ENCODE measurements at regions of chr12 and their contacts with region 1.

Region 1: DNA sequence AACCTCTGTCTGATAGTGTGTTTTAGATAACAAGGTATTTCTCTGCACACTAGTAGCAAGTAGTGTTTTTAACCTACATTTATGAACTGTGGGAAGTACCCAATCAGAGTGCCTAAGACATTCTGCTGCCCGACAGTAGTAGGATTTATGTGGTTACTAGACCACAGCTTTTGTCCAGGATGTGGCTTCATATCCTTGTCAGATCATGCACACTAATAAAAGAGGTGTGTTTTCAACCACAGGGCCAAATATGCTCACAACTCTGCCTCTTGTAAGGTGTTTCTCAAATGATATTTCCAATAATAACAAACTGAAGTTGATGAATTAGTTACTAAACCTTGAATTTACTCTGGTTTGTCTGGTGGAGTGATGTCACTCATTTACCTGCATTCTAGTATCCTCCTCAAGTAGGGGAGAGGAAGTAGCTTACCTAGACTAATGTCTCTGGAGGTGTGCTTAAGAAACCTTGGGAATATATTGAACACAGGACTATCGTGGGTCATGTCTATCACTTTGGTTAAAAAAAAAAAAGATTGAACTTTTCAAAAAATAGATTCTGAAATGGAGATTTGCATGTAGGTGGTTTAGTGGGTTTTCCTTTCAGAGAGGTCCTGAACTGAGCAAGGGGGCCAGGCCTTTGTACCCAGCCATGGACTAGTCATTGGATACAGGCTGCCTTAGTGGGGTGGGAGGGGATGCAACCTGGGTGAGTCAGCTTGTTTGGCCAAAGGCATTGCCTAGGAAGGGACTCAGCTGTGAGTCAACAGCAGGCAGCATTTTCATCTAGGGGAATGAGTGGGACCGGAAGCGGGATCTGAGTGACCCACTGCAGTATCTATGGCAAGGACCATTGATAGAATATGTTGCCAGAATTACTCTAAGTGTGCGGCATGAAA is 14.1 kb downstream of the FBXW8 start:
- DNase-seq: peak in 9 of 10 donors; percentile 11 to 88 (median 76)
- ATAC-seq: peak; percentile 91 to 99
- H3K4me3 Mint-ChIP-seq: peak overlapping the region; percentile 53 to 86 (median 76)
- H3K27ac Mint-ChIP-seq: peak overlapping the region; percentile 15 to 94 (median 58)
- H3K4me1 Mint-ChIP-seq: peaks cover 36 to 85% (median 77%) of the 10 kb centered on the region in 4 donors
- H3K27me3 Mint-ChIP-seq: no peaks in the 10 kb centered on the region

Region 2: GRCh38 chr12:116455540-116456329 is 469.1 kb before region 1 on chr12:
- POLR2A ChIA-PET with region 1: no interaction called
- DNase-seq: no peak
- ATAC-seq: no peak
- H3K4me3 Mint-ChIP-seq: no peak overlapping the region
- H3K27ac Mint-ChIP-seq: no peak overlapping the region
- H3K4me1 Mint-ChIP-seq: peaks cover 0 to 6% (median under 1%) of the 10 kb centered on the region in 4 donors
- H3K27me3 Mint-ChIP-seq: peaks cover 0 to 7% (median 3%) of the 10 kb centered on the region in 5 donors

Region 3: DNA sequence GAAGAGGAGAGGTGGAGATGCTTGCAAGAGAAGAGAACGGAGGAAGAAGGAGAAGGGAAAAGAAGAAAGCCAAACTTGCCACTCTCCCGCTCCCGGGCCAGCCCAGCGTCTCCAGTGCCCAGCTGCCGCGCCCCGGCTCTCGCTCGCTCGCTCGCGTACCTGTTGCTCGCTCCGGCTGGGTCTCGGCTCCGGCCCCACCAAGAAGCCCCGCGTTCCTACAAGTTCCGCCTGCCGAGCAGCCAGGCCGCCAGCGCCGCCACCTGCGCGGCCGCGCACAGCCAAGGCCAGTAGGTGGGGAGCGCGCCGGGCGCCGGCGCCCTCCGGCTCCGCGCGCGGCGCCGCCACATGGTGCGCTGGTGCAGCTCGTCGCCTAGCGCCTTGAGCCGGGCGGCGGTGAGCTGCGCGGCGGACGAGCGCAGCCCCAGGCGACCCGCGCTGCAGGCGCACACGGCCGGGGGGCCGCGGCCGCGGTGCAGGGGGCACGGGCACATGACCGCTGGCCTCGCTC is 43.9 kb before region 1 on chr12:
- POLR2A ChIA-PET with region 1: no interaction called
- DNase-seq: peak in 8 of 10 donors; percentile 2 to 30 (median 20)
- ATAC-seq: peak; percentile 80 to 86
- H3K4me3 Mint-ChIP-seq: peak overlapping the region; percentile 75 to 99 (median 89)
- H3K27ac Mint-ChIP-seq: peak overlapping the region in 2 of 10 donors; percentile 10 to 51
- H3K4me1 Mint-ChIP-seq: peaks cover 17 to 41% (median 36%) of the 10 kb centered on the region in 4 donors
- H3K27me3 Mint-ChIP-seq: peaks cover 34 to 86% (median 60%) of the 10 kb centered on the region in 5 donors

Region 4: DNA sequence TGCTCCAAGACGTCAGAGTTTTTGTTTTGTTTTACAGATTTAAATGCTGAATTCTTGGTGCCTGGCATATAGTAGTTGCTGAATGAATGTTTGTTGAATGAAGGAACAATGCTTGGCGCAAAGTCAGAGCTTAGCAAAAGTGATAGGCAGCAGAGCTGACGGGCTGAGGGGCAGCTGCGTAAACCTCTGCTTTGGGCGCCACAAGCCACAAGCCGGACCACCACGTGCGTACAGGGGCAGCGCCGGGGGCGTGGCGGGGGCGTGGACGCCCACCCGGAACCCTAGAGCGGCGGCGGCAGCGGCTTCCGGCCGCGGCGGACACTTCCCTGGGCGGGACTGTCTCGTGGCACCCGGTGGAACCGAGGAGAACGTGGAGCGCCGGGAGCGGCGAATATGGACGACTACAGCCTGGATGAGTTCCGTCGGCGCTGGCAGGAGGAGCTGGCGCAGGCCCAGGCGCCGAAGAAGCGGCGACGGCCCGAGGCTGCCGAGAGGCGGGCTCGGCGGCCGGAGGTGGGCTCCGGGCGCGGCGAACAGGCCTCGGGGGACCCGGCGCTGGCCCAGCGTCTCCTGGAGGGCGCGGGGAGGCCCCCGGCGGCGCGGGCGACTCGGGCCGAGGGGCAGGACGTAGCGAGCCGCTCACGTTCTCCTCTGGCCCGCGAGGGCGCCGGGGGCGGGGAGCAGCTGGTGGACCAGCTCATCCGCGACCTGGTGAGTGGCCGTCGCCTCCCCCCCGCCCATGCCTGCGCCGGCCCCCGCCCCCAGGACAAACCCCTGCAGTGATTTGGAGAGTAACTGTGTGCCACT is 14.0 kb before region 1 on chr12 and contains the start of gene FBXW8:
- POLR2A ChIA-PET with region 1: interaction called, 10 read pairs
- DNase-seq: peak; percentile 29 to 76 (median 56)
- ATAC-seq: peak; percentile 87 to 90
- H3K4me3 Mint-ChIP-seq: peak within 1 kb of the TSS; percentile 86 to 99 (median 95)
- H3K27ac Mint-ChIP-seq: peak within 1 kb of the TSS; percentile 78 to 97 (median 90)
- H3K4me1 Mint-ChIP-seq: peaks cover 18 to 41% (median 38%) of the 10 kb centered on the region in 4 donors
- H3K27me3 Mint-ChIP-seq: no peaks in the 10 kb centered on the region
- polyA plus RNA-seq, gene FBXW8: 5.3 to 9.0 (median 6.4) TPM

Region 5: DNA sequence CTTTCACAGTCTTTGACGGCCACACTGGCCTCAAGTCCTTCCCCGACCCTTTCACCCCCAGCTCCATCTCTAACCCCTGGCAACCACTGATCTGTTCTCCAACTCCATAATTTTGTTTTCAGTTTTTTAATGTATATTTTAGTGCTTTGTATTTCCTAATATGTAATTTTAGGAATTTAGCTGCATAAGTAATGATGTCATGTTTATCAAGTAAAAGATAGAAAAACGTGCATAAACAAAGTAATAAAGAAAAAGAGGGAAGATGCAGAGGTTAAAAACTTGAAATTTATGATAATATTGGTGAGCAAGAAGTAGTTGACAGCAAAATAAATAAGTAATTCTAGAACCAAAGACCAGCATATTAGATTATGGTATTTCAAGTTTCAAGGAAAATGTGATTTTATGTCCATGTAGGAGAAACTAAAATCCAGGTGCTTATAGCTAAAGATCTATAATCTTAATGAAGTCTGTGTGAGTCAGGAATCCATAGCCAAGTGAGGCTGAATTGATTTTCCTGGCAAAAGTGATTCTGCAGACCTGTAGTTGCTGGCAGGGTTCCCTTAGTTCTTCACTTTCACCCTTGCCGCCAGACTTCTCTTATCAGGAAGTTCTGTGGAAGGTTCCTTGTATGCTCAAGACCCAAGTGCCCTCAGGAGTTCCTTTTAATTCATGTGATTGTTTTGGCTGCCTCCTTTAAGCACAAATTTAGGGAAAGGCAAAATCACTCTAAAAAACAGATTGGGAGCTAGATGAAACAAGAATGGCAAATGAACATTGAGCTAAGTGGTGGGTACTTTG is 10.3 kb after region 1 on chr12:
- POLR2A ChIA-PET with region 1: no interaction called
- DNase-seq: no peak
- ATAC-seq: no peak
- H3K4me3 Mint-ChIP-seq: no peak overlapping the region
- H3K27ac Mint-ChIP-seq: no peak overlapping the region
- H3K4me1 Mint-ChIP-seq: peaks cover 20 to 37% (median 25%) of the 10 kb centered on the region in 4 donors
- H3K27me3 Mint-ChIP-seq: no peaks in the 10 kb centered on the region